ENCODE measurements at regions of chr2 and their contacts with region 1.

Region 1: GRCh38 chr2:112941753-112942658 is 31.0 kb downstream of the IL37 start:
- ATAC-seq: peak; percentile 89 to 99 (median 92)
- H3K4me3 ChIP-seq: no peak overlapping the region
- H3K27ac ChIP-seq: no peak overlapping the region
- H3K4me1 ChIP-seq: no peaks in the 10 kb centered on the region

Region 2: GRCh38 chr2:112626604-112627059 is 315.4 kb before region 1 on chr2:
- in situ Hi-C with region 1: loop called in 2 of 9 experiments (anchors 25 kb)
- ATAC-seq: peak; percentile 3 to 84 (median 69)
- H3K4me3 ChIP-seq: no peak overlapping the region
- H3K27ac ChIP-seq: no peak overlapping the region
- H3K4me1 ChIP-seq: peaks cover 3 to 6% of the 10 kb centered on the region in 2 donors

Region 3: GRCh38 chr2:112645310-112646101 is 296.5 kb before region 1 on chr2 and contains the start of gene SLC20A1:
- in situ Hi-C with region 1: loop called in 1 of 9 experiments (anchors 25 kb)
- ATAC-seq: peak; percentile 79 to 93 (median 92)
- H3K4me3 ChIP-seq: peak within 1 kb of the TSS; percentile 69 to 90 (median 78)
- H3K27ac ChIP-seq: peak within 1 kb of the TSS; percentile 83 to 88
- H3K4me1 ChIP-seq: peaks cover 14 to 15% of the 10 kb centered on the region in 2 donors
- total RNA-seq, gene SLC20A1: 31.4 to 62.2 (median 47.6) TPM

Region 4: GRCh38 chr2:112726497-112727190 is 215.4 kb before region 1 on chr2:
- in situ Hi-C with region 1: loop called in 2 of 9 experiments (anchors 25 kb)
- ATAC-seq: peak; percentile 94 to 99 (median 97)
- H3K4me3 ChIP-seq: no peak overlapping the region
- H3K27ac ChIP-seq: no peak overlapping the region
- H3K4me1 ChIP-seq: peaks cover 0 to 3% of the 10 kb centered on the region in 2 donors

Region 5: GRCh38 chr2:112749755-112750559 is 192.0 kb before region 1 on chr2:
- in situ Hi-C with region 1: loop called in 7 of 9 experiments (anchors 10 to 25 kb)
- ATAC-seq: peak; percentile 92 to 97 (median 95)
- H3K4me3 ChIP-seq: no peak overlapping the region
- H3K27ac ChIP-seq: no peak overlapping the region
- H3K4me1 ChIP-seq: peaks cover 6 to 8% of the 10 kb centered on the region in 2 donors

Region 6: DNA sequence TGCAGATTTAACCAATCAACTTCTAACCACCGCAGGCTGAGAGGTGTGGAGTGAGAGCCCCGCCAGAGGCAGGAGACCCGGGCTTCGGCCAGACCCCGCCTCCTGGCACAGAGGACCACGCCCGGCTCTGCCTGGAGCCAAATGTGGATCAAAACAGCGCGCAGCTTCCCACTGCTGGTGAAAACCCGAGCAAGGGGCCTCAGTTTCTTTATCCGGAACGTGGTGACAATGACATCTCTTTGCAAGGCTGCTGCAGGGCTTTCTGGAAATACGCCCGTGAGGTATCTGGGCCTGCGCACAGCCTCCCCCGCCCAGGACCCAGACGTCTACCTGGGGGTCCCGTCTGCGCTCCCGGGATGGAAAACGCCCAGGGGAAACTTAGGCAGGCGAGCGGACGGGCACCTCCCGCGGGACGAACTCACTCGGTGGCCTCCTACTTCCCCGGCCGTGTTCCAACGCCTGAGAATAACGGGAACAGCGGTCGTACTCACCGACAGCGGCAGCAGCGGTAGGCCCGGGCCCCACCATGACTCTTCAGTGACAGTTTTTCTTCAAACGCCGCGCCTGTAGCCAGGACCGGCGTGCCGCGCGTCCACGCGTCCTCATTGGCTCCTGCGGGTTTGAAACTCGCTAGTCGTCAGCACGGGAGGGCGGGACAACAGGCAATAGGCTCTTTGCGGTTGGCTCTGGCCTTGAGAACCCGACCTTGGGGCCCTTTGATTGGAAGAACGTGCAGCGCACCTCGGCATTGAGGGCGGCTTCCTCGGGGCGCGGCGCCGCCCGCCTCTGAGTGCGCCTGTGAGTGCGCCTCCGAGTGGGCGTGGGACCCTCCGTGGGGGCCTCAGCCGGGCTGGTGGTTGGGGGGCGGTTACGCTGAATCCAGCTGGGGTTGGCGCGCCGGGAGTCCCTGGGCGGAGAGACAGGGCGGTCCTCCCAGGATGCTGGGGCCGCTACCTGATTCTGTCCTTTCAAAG is 177.6 kb before region 1 on chr2 and contains the start of gene CKAP2L:
- in situ Hi-C with region 1: loop called in 5 of 9 experiments (anchors 10 to 25 kb)
- ATAC-seq: peak; percentile 96 to 99 (median 98)
- H3K4me3 ChIP-seq: peak within 1 kb of the TSS; percentile 49 to 70 (median 52)
- H3K27ac ChIP-seq: peak within 1 kb of the TSS in 1 of 2 donors; percentile 56
- H3K4me1 ChIP-seq: peaks cover 5 to 6% of the 10 kb centered on the region in 2 donors
- total RNA-seq, gene CKAP2L: 0.73 to 22.5 (median 1.2) TPM

Region 7: GRCh38 chr2:113012436-113013335 is 70.7 kb after region 1 on chr2:
- in situ Hi-C with region 1: no loop called
- ATAC-seq: peak in 7 of 8 experiments; percentile 28 to 94 (median 79)
- H3K4me3 ChIP-seq: no peak overlapping the region
- H3K27ac ChIP-seq: no peak overlapping the region
- H3K4me1 ChIP-seq: no peaks in the 10 kb centered on the region

Region 8: DNA sequence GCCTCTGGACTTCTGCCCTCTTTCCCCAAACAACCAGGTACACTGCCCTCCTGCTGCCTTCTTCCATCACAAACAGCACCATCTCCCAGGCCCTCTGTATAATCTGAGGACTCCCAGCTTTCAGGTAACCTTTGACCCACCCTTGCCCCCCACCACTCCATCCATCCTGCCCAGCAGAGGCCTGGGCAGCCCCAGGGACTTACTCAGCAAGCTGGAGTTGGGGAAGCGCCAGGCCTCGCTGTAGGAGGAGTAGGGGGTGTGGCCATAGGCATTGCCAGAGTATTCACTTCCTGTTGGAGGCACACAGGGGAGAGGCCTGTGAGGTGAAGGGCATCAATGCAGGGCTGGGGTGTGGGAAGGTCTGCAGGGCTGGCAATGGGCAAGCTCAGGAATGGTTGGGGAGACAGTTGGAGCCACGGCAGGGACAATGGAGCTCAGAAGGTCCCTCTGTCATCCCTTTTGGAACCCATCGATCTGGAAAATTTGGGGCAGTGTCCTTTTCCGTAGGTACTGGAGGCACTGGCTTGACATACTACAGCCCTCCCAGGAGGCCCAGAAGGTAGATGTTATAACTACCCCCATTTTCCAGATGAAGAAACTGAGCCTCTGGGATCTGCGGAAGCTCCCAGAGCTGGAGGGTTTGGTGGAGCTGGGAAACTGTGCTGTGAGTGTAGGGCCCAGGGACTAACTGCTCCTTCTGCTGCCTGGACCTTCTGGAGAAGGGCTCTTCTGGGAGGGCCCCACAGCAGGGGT is 278.1 kb after region 1 on chr2:
- in situ Hi-C with region 1: no loop called
- ATAC-seq: peak in 7 of 8 experiments; percentile 12 to 34 (median 29)
- H3K4me3 ChIP-seq: no peak overlapping the region
- H3K27ac ChIP-seq: peak overlapping the region in 1 of 2 donors; percentile 13
- H3K4me1 ChIP-seq: peaks cover 29 to 41% of the 10 kb centered on the region in 2 donors

Region 9: DNA sequence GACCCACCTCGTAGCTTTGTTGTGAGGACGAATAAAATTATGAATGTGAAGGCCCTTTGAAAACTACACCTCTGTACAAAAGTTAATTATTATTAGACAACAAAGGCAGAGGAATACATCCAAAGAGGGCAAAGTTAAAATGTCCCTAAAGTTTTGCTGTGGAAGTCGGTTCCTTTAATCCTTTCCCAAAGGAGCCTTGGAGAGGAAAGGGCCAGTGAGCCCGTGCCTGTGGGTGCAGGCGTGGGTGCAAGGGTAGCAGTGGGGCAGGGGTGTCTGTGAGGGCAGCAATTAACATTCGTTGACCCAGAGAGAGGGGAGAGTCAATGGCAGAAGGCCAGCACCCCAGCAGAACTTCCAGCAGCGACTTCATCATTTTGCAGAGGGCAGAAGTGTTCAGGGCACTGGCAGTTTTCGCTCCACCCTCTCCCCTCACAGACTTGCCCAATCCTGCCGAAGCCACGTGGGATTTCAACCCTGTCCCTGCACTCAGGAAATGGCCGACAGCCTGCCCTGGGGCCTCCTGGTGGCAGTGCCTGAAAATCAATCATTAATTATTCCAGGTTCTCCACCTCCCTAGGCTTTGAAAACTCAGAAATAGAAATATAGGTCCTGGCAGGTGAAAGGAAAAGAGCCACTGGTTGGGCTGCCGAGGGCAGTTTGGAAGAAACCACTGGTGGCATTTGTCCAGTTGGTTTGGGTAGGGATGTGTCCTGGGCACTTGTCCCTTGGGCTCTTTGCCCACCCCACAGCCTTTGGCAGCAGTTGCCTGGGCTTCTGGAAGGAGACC is 340.9 kb after region 1 on chr2:
- in situ Hi-C with region 1: no loop called
- ATAC-seq: peak in 5 of 8 experiments; percentile 15 to 44 (median 27)
- H3K4me3 ChIP-seq: no peak overlapping the region
- H3K27ac ChIP-seq: no peak overlapping the region
- H3K4me1 ChIP-seq: peaks cover 0 to 5% of the 10 kb centered on the region in 2 donors